ENCODE measurements at regions of chr12 and their contacts with region 1.

Region 1: DNA sequence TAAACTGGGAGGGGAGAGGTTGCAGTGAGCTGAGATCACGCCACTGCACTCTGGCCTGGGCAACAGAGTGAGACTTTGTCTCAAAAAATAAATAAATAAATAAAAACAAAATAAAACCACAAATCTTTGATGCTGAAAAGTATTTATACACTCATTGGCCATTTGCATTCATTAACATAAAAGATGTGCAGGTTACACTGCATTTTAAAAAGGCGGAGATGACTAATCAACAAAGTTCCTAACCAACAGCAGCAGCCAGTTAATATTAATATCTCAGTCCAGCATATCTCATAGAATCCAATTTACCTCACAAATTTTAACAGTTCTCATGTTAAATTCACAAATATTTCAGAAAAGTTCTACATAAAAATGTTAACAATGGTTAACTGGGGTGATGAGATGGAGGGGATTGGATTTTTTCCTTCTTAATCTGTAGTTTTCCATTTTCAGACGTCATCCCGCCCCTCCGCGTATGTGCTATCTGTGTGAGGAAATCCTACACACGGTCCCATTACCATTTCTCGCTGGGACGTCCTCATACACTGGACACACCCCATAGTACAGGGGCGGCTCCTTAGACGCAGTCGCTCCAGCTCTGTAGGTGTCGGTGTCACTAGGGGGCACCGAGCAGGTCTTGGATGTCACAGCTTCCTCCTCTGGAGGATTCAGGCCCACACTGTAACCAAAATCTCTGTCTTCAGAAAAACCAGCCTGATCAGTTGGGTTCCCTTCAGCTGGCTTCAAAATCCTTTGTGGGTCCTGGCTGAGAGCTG is 7.3 kb downstream of the ANKLE2 start:
- DNase-seq: no peak
- H3K4me3 Mint-ChIP-seq: no peak overlapping the region
- H3K27ac Mint-ChIP-seq: no peak overlapping the region
- H3K4me1 Mint-ChIP-seq: peaks cover 5% of the 10 kb centered on the region
- H3K27me3 Mint-ChIP-seq: no peaks in the 10 kb centered on the region

Region 2: DNA sequence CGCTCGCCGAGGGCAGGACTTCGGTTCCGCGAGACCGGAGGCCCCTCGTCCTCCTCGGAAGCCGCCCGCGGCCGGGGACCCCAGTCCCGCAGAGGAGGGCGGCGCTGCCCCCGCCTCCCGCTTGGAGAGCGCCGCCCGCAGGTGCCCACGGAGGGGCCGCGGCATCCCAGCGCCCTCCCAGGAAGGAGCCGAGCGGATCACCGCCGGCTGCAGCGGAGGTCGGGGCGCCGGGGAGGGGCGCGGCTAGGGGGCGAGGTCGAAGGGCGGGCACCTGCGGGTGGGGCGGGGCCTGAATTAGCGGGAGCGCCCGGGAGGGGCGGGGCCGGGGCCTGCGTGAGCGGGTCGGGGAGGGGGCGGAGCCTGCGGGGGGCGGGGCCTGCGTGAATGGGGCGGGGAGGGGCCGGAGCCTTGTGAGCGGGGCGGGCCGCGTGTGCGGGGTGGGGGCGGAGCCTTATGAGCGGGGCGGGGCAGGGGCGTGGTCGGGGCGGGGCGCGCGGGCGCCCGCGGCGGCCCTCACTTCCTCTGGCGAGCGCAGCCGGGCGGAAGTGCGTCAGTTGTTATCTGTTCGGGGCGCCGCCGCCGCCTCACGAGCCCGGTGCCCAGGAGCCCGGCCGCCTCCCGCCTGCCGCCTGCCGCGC is 264.6 kb before region 1 on chr12 and contains the start of gene FBRSL1:
- intact Hi-C with region 1: no loop called
- DNase-seq: peak; percentile 86
- H3K4me3 Mint-ChIP-seq: peak within 1 kb of the TSS; percentile 87
- H3K27ac Mint-ChIP-seq: peak within 1 kb of the TSS; percentile 90
- H3K4me1 Mint-ChIP-seq: peaks cover 45% of the 10 kb centered on the region
- H3K27me3 Mint-ChIP-seq: peaks cover 1% of the 10 kb centered on the region
- total RNA-seq, gene FBRSL1: 75.8 and 80.2 TPM in 2 replicates

Region 3: GRCh38 chr12:132741620-132742019 is 12.7 kb before region 1 on chr12:
- intact Hi-C with region 1: loop called (anchors 1 kb)
- DNase-seq: no peak
- H3K4me3 Mint-ChIP-seq: no peak overlapping the region
- H3K27ac Mint-ChIP-seq: no peak overlapping the region
- H3K4me1 Mint-ChIP-seq: peaks cover 7% of the 10 kb centered on the region
- H3K27me3 Mint-ChIP-seq: no peaks in the 10 kb centered on the region

Measured in activated T-helper 1 cell treated with anti-CD3 and anti-CD28 coated beads, Interleukin-12 subunit alpha, Interleukin-12 subunit beta, Interleukin-2, Interleukin-4 antibody, amounts not matched to agents 30 ng/mL and 10 ng/mL and 1 ng/mL, durations not matched to agents 14 hours and 24 hours and 36 hours (primary cell).